Sigmoid colon (tissue), 7 donors: ENCODE measurements at regions of chr6 and their contacts with region 1.

Region 1: GRCh38 chr6:166275714-166276166 is 32.5 kb downstream of the PRR18 start:
- DNase-seq: peak; percentile 78
- H3K4me3 ChIP-seq: no peak overlapping the region
- H3K27ac ChIP-seq: no peak overlapping the region
- H3K4me1 ChIP-seq: peaks cover 3 to 16% (median 9%) of the 10 kb centered on the region in 4 donors
- H3K27me3 ChIP-seq: peaks cover 0 to 16% (median 0%) of the 10 kb centered on the region in 3 donors
- CTCF ChIP-seq: peak; percentile 81 to 99 (median 83)
- EP300 ChIP-seq: no peak
- POLR2A ChIP-seq: no peak

Region 2: GRCh38 chr6:166145751-166146150 is 130.0 kb before region 1 on chr6:
- intact Hi-C with region 1: no loop called
- DNase-seq: no peak
- H3K4me3 ChIP-seq: no peak overlapping the region
- H3K27ac ChIP-seq: no peak overlapping the region
- H3K4me1 ChIP-seq: no peaks in the 10 kb centered on the region
- H3K27me3 ChIP-seq: no peaks in the 10 kb centered on the region
- CTCF ChIP-seq: no peak
- EP300 ChIP-seq: no peak
- POLR2A ChIP-seq: no peak

Region 3: GRCh38 chr6:166402582-166403277 is 127.0 kb after region 1 on chr6:
- intact Hi-C with region 1: loop called (anchors 1 kb)
- DNase-seq: no peak
- H3K4me3 ChIP-seq: no peak overlapping the region
- H3K27ac ChIP-seq: no peak overlapping the region
- H3K4me1 ChIP-seq: peaks cover 0 to 4% (median 0%) of the 10 kb centered on the region in 4 donors
- H3K27me3 ChIP-seq: peaks cover 0 to 9% (median 4%) of the 10 kb centered on the region in 3 donors
- CTCF ChIP-seq: no peak
- EP300 ChIP-seq: no peak
- POLR2A ChIP-seq: no peak